MCF 10A (cell line): ENCODE measurements at regions of chr4 and their contacts with region 1.

Region 1: DNA sequence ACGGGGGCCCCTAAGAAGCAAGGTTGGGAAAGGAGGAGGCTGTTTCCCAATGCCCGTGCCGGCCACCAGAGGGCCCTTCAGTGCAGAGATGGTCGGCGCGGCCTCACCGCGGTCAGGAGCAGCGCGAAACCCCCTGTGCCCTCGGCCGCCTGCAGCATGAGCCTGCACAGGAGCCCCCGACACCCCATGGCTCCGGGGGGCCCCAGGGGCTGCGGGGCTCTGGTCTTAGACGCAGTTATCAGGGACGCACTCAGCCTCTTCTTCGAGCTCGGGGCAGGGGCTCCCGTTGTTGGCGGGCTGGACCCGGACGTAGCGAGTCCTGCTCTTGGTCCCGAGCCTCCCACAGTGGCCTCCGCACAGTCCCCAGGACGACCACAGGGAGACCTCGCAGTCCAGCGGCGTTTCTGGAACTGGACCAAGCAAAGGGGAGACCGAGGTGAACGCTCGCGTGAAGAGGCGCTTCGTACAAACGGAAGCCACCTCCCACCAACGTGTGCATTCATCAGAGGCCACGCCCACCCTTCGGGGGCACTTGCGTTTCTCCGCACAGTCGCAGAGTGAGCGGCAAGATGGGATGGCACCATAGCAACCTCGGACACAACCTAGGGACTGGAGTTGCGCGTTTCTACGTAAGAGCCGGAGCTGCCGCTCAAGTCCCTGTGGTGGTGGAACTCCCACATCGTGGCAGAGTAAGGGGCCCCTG is 5.0 kb downstream of the SPON2 start:
- DNase-seq: peak; percentile 56
- H3K4me3 Mint-ChIP-seq: peak overlapping the region; percentile 59
- H3K27ac Mint-ChIP-seq: no peak overlapping the region
- H3K4me1 Mint-ChIP-seq: no peaks in the 10 kb centered on the region
- H3K27me3 Mint-ChIP-seq: no peaks in the 10 kb centered on the region
- CTCF ChIP-seq: peak; percentile 80

Region 2: DNA sequence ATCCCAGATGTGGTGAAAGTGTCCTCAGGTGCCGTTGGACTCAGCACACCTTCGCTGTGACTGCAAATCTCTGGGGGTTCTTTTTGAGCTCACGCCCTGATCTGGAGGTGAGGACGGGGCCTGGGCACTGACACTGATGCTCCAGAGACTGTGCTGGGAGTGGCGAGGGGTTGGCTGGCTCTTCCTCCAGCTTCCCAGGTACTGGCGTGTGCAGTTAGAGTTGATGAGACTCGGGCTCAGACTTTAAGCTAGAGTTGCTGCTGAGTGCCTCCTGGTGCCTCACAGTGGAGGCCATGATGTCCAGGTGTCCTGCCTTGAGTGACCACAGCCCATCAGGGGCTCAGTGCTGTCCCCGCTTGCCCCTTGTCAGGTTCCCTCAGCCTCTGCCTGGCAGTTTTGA is 11.3 kb before region 1 on chr4:
- CTCF ChIA-PET with region 1: interaction called, 13 read pairs
- POLR2A ChIA-PET with region 1: no interaction called
- intact Hi-C with region 1: no loop called
- DNase-seq: no peak
- H3K4me3 Mint-ChIP-seq: no peak overlapping the region
- H3K27ac Mint-ChIP-seq: no peak overlapping the region
- H3K4me1 Mint-ChIP-seq: no peaks in the 10 kb centered on the region
- H3K27me3 Mint-ChIP-seq: peaks cover 61% of the 10 kb centered on the region
- CTCF ChIP-seq: no peak

Region 3: GRCh38 chr4:1177274-1178141 is 10.1 kb after region 1 on chr4:
- CTCF ChIA-PET with region 1: interaction called, 12 read pairs
- POLR2A ChIA-PET with region 1: interaction called, 6 read pairs
- intact Hi-C with region 1: no loop called
- DNase-seq: peak; percentile 62
- H3K4me3 Mint-ChIP-seq: peak overlapping the region; percentile 41
- H3K27ac Mint-ChIP-seq: peak overlapping the region; percentile 95
- H3K4me1 Mint-ChIP-seq: peaks cover 20% of the 10 kb centered on the region
- H3K27me3 Mint-ChIP-seq: no peaks in the 10 kb centered on the region
- CTCF ChIP-seq: no peak

Region 4: GRCh38 chr4:1192091-1192492 is 24.7 kb after region 1 on chr4:
- CTCF ChIA-PET with region 1: interaction called, 14 read pairs
- POLR2A ChIA-PET with region 1: interaction called, 9 read pairs
- intact Hi-C with region 1: no loop called
- DNase-seq: peak; percentile 94
- H3K4me3 Mint-ChIP-seq: no peak overlapping the region
- H3K27ac Mint-ChIP-seq: peak overlapping the region; percentile 51
- H3K4me1 Mint-ChIP-seq: peaks cover 18% of the 10 kb centered on the region
- H3K27me3 Mint-ChIP-seq: peaks cover 6% of the 10 kb centered on the region
- CTCF ChIP-seq: no peak

Region 5: GRCh38 chr4:1249148-1249730 is 81.8 kb after region 1 on chr4:
- CTCF ChIA-PET with region 1: no interaction called
- POLR2A ChIA-PET with region 1: interaction called, 4 read pairs
- intact Hi-C with region 1: loop called (anchors 5 kb)
- DNase-seq: peak; percentile 80
- H3K4me3 Mint-ChIP-seq: peak overlapping the region; percentile 83
- H3K27ac Mint-ChIP-seq: peak overlapping the region; percentile 81
- H3K4me1 Mint-ChIP-seq: no peaks in the 10 kb centered on the region
- H3K27me3 Mint-ChIP-seq: no peaks in the 10 kb centered on the region
- CTCF ChIP-seq: no peak

Region 6: GRCh38 chr4:1266881-1267763 is 99.7 kb after region 1 on chr4:
- CTCF ChIA-PET with region 1: interaction called, 9 read pairs
- POLR2A ChIA-PET with region 1: no interaction called
- intact Hi-C with region 1: loop called (anchors 1 kb)
- DNase-seq: no peak
- H3K4me3 Mint-ChIP-seq: no peak overlapping the region
- H3K27ac Mint-ChIP-seq: no peak overlapping the region
- H3K4me1 Mint-ChIP-seq: no peaks in the 10 kb centered on the region
- H3K27me3 Mint-ChIP-seq: peaks cover 2% of the 10 kb centered on the region
- CTCF ChIP-seq: no peak

Region 7: DNA sequence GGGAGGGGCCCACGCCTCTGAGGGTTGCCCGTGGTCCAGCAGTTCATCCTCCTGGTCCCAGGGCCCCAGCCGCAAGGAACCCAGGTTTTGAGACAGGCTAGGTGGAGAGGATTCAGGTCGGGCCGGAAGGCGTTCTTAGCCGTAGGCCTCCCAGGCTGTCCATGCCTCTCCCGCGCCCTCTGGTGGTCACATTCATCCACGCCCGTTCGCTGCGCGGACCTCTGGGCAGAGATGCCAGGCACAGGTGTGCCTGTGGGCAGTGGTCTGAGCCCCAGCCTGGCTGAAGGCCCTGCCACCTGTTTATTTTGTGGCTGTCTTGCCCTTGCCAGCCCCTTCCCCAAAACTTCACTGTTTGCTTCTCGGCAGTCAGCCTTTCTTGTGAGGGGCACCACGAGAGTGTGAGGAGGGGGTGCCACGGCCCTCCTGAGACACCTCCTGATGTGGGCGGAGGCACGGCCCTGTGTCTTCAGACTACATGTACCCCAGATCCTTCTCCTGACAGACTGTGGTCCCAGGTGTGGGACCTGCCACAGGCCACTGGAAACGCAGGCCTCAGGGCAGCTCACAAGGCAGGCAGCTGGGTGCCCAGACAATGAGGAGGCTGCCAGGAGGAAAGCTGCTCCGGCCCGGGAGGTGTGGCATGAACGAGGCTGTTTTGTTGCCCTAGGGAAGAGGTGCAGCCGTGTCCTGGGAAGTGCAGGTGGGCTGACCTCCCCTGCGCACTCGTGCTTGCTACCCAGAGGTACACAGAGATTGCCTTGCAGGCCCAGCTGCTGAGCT is 184.6 kb after region 1 on chr4:
- CTCF ChIA-PET with region 1: no interaction called
- POLR2A ChIA-PET with region 1: no interaction called
- intact Hi-C with region 1: loop called (anchors 1 kb)
- DNase-seq: peak; percentile 81
- H3K4me3 Mint-ChIP-seq: no peak overlapping the region
- H3K27ac Mint-ChIP-seq: peak overlapping the region; percentile 42
- H3K4me1 Mint-ChIP-seq: peaks cover 15% of the 10 kb centered on the region
- H3K27me3 Mint-ChIP-seq: no peaks in the 10 kb centered on the region
- CTCF ChIP-seq: peak; percentile 85